Lower leg skin (tissue), 4 donors: ENCODE measurements at regions of chr15 and their contacts with region 1.

Region 1: DNA sequence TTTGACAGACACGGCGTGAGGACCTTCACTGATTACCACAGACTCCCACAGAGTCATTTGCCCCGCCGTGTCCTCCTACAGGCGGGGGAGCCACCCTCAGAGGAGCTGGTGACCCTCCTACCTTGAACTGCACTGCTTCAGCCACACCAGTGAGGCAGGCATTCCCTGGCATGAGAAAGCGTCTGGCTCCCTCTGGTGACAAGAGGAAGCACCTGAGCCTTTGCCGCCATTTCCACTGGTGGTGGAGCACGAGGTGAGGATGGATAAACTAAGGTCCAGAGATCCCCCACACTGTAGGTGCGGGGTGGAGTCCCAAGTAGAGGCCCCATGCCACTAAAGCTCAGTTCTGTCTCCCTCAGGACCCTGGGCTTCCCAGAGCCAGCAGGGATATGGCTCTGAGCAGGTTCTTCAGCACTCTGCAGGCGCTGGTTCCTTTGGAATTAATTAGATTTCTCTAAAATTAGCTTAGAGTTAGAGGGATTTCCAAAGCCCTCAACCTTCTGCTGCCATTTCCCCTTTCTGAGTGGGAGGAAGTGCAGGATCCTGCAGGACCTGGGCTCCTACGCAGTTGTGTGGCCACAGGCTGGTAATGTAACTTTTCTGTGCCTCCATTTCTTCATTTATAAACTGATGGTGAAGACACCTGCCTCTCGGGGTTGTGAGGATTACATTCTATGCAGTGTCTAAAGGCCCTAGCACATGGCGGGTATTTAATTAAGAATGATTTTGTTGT is 224.0 kb downstream of the SLCO3A1 start:
- DNase-seq: peak; percentile 74 to 93
- H3K4me3 ChIP-seq: no peak overlapping the region
- CTCF ChIP-seq: no peak
- POLR2A ChIP-seq: no peak

Region 2: GRCh38 chr15:91302588-91303439 is 774.7 kb before region 1 on chr15:
- intact Hi-C with region 1: loop called (anchors 5 kb)
- DNase-seq: no peak
- H3K4me3 ChIP-seq: no peak overlapping the region
- CTCF ChIP-seq: peak in 1 of 3 donors; percentile 17
- POLR2A ChIP-seq: no peak

Region 3: GRCh38 chr15:91706322-91707032 is 371.0 kb before region 1 on chr15:
- intact Hi-C with region 1: loop called (anchors 10 kb)
- DNase-seq: peak; percentile 87 to 96
- H3K4me3 ChIP-seq: no peak overlapping the region
- CTCF ChIP-seq: peak in 1 of 3 donors; percentile 82
- POLR2A ChIP-seq: no peak

Region 4: DNA sequence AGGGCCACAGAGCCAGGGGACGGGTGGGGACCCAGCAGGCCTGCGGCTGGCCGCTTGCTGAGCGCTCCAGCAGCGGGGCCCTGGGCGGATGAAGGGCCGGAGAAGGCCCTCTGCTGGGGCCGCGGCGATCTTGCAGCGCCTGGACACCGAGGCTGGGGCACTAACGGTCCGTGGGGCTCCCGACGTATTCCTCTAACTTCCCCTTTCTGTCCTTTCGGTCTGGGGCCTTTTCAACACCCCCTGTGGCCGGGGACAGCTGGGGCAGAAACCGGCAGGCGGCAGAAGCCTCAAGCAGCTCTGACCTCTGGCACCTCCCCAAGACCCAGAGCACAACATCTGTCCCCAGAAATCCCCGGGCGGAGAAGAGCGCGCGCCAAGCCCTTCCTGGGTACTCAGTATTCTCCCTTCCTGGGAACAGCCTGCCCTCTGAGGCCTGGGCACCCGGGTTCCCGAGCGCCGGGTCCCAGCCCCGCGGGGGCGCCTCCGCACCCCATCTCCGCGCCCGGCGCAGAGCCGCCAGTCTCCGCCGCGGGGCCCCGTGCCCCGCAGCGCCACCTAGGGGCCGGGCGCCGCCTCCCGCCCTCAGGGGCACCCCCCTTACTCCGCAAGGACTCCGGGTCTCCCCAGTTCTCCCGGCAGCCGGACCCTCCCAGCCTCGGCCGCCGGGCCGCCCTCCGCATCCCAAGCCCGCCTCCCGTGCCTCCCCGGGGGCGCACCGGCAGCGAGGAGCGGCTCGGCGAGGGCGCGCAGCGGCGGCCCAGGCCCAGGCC is 224.6 kb before region 1 on chr15:
- intact Hi-C with region 1: loop called (anchors 5 kb)
- DNase-seq: peak; percentile 79 to 95
- H3K4me3 ChIP-seq: peak overlapping the region; percentile 68
- CTCF ChIP-seq: peak in 1 of 3 donors; percentile 9
- POLR2A ChIP-seq: no peak